MCF 10A (cell line): ENCODE measurements at regions of chr2 and their contacts with region 1.

Region 1: DNA sequence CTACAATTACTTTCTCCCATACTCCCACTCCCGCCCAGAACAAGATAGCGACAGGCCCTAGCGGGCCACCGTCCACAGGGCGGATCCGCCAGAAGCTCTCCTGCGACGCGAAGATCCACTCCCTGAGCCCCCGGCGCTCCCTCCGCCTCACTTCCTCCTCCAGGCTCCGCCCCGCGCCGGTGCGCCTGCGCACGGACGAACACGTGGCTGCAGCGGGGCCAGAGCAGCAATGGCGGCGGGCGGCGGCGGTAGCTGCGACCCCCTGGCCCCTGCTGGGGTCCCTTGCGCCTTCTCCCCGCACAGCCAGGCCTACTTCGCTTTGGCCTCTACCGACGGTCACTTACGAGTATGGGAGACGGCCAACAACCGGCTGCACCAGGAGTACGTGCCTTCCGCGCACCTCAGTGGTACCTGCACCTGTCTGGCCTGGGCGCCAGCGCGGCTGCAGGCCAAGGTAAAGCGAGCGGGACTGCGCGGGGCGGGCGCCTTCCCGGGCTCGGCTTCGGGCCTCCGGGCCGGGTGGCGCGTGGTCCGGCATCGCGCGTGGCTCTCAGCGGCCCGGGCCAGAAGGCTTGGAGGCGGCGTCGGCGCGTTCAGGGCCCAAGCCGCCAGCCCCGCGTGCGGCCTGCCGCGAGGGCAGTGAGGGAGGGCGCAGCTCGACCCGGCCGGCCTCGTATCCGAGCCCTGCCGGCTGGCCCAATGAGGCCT is at the start of gene WDR43:
- DNase-seq: peak; percentile 98
- H3K4me3 Mint-ChIP-seq: peak within 1 kb of the TSS; percentile 88
- H3K27ac Mint-ChIP-seq: peak within 1 kb of the TSS; percentile 92
- H3K4me1 Mint-ChIP-seq: peaks cover 27% of the 10 kb centered on the region
- H3K27me3 Mint-ChIP-seq: no peaks in the 10 kb centered on the region
- CTCF ChIP-seq: no peak
- total RNA-seq, gene WDR43: 100 and 160 TPM in 2 replicates

Region 2: GRCh38 chr2:28566521-28567041 is 328.0 kb before region 1 on chr2:
- CTCF ChIA-PET with region 1: interaction called, 5 read pairs
- POLR2A ChIA-PET with region 1: interaction called, 13 read pairs
- intact Hi-C with region 1: loop called (anchors 2 kb)
- DNase-seq: peak; percentile 83
- H3K4me3 Mint-ChIP-seq: peak overlapping the region; percentile 78
- H3K27ac Mint-ChIP-seq: no peak overlapping the region
- H3K4me1 Mint-ChIP-seq: peaks cover 18% of the 10 kb centered on the region
- H3K27me3 Mint-ChIP-seq: no peaks in the 10 kb centered on the region
- CTCF ChIP-seq: peak; percentile 99

Region 3: DNA sequence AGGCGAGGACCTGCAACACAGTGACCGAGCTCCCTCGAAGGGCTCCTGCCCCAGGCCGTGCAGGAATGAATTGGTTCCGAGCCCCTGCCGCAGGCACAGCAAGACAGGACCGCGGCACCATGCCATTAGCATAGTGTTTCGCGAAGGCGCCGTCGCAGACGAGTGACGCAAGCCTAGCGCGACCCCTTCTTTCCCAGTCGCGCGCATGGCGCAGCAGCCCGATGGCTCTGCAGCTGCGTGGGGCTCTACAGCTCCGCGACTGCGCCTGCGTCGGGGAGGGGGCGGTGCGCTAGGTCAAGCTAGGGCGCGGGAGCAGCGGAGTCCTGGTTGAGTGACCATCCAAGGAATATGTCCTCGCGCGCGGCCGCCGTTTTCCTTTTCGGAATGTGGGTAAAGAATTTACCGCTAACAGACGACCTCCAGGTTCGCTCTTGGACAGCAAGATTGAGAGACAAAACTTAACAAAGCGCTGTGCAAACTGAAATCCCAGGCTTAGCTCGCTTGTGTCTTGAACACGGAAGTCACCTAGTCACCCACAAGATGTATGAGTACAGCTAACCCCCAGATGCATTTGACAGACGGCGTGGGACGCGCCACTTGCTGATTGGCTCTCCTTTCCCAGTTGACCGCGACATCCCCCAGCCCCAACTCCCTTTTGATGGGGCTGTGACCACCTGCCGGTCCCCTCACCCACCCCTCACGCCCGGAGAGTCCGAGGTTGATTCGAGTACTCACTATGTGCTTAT is 24.3 kb before region 1 on chr2 and contains the start of gene TRMT61B:
- CTCF ChIA-PET with region 1: interaction called, 3 read pairs
- POLR2A ChIA-PET with region 1: interaction called, 79 read pairs
- intact Hi-C with region 1: loop called (anchors 1 kb)
- DNase-seq: peak; percentile 93
- H3K4me3 Mint-ChIP-seq: peak within 1 kb of the TSS; percentile 92
- H3K27ac Mint-ChIP-seq: peak within 1 kb of the TSS; percentile 79
- H3K4me1 Mint-ChIP-seq: peaks cover 9% of the 10 kb centered on the region
- H3K27me3 Mint-ChIP-seq: no peaks in the 10 kb centered on the region
- CTCF ChIP-seq: no peak
- total RNA-seq, gene TRMT61B: 10.4 and 13.4 TPM in 2 replicates

Region 4: GRCh38 chr2:28909655-28910353 is 15.2 kb after region 1 on chr2:
- CTCF ChIA-PET with region 1: interaction called, 11 read pairs
- POLR2A ChIA-PET with region 1: interaction called, 56 read pairs
- intact Hi-C with region 1: no loop called
- DNase-seq: no peak
- H3K4me3 Mint-ChIP-seq: no peak overlapping the region
- H3K27ac Mint-ChIP-seq: no peak overlapping the region
- H3K4me1 Mint-ChIP-seq: peaks cover 17% of the 10 kb centered on the region
- H3K27me3 Mint-ChIP-seq: no peaks in the 10 kb centered on the region
- CTCF ChIP-seq: no peak

Region 5: DNA sequence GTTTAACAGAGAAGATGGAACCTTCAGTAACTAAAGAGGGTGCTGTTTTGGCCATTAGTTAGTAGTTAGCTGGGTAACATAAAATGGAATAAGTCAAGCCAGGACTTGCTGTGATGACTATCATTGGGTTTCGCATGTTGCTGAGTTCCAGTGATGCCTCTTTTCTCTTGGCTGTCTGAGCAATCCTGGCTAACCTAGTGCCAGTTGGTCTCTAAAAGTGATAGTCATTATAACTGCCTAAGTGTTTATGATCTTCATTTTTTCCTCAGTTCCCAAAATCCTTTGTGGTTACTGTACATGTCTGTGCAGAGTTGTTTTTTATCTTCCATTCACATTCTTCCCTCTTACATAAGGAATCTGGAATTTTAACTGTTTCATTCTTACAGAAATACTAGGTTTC is 33.3 kb after region 1 on chr2:
- CTCF ChIA-PET with region 1: no interaction called
- POLR2A ChIA-PET with region 1: interaction called, 15 read pairs
- intact Hi-C with region 1: no loop called
- DNase-seq: no peak
- H3K4me3 Mint-ChIP-seq: no peak overlapping the region
- H3K27ac Mint-ChIP-seq: peak overlapping the region; percentile 80
- H3K4me1 Mint-ChIP-seq: peaks cover 21% of the 10 kb centered on the region
- H3K27me3 Mint-ChIP-seq: no peaks in the 10 kb centered on the region
- CTCF ChIP-seq: no peak